Gastrocnemius medialis (tissue), 4 donors: ENCODE measurements at regions of chr1 and their contacts with region 1.

Region 1: DNA sequence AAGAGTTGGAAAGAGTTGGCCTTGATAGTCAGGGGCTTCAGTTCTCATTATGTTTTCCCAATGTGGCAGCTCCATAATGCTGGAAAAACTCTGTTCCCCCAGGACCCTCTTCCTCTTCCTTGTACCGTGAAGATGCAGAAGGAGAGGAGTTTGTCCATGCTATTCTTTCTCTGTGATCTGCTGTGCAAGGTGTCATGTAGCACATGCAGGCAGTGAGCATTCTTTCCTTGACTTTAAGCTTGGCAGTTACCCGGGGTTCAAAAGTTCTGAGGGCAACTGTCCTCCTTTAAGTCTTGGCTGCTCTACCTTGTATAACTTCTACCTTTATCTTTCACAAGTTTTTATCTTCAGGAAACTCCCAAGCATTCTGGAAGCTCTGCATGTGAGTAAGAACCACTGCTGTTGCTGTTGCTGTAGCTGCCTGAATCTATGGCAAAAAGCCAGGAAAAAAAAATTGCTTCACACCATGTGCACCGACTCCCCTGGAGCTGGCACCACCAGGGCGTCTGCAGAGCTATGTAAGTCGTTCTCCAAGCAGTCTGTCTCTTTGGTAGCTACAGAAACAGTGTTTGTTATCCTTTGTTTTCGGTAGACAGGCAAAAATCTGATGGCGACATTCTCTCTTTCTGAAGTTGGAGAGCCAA is 42.7 kb upstream of the SLC16A1 start:
- DNase-seq: peak; percentile 52 to 79
- ATAC-seq: peak; percentile 63 to 78
- H3K4me3 ChIP-seq: no peak overlapping the region
- H3K27ac ChIP-seq: peak overlapping the region; percentile 91 to 94 (median 94)
- H3K4me1 ChIP-seq: peaks cover 51 to 67% of the 10 kb centered on the region in 2 donors
- H3K27me3 ChIP-seq: no peaks in the 10 kb centered on the region
- CTCF ChIP-seq: no peak
- POLR2A ChIP-seq: no peak

Region 2: GRCh38 chr1:112840631-112841624 is 157.8 kb before region 1 on chr1:
- in situ Hi-C with region 1: no loop called
- intact Hi-C with region 1: no loop called
- DNase-seq: no peak
- ATAC-seq: no peak
- H3K4me3 ChIP-seq: no peak overlapping the region
- H3K27ac ChIP-seq: no peak overlapping the region
- H3K4me1 ChIP-seq: no peaks in the 10 kb centered on the region
- H3K27me3 ChIP-seq: no peaks in the 10 kb centered on the region
- CTCF ChIP-seq: no peak
- POLR2A ChIP-seq: no peak

Region 3: DNA sequence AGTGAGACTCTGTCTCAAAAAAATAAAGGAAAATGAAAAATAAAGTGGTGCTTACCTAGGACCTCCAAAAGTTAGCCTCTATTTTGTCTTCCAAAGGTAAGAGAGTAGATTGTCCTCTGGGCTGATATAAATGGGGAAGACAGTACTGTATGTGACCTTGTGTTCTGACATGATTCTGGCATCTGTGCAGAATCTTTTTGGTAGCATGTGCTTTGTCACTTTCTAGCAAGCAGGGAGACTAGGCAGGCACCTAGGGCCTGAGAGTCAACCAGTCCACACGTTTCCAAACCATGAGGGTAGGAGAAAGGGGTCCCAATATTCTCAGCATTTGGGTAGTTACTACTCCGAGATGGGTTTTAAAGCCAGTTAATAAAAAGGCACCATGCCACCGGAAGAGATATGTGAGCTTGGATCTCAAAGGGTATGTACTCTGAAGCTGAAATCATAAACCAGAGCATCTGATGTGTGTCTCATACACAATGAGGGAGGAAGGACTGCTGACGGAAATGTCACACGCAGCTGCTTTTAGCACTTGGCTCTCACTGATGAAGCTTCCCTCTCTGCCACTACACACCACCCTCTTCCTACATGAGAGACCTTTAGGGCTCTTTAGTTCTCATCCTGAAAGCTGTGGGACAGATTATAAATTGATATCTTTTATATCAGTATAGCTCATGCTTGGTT is 15.7 kb before region 1 on chr1:
- in situ Hi-C with region 1: no loop called
- intact Hi-C with region 1: loop called (anchors 1 kb)
- DNase-seq: peak; percentile 75 to 81
- ATAC-seq: peak; percentile 97 to 99
- H3K4me3 ChIP-seq: no peak overlapping the region
- H3K27ac ChIP-seq: peak overlapping the region; percentile 91 to 94 (median 94)
- H3K4me1 ChIP-seq: peaks cover 35 to 37% of the 10 kb centered on the region in 2 donors
- H3K27me3 ChIP-seq: no peaks in the 10 kb centered on the region
- CTCF ChIP-seq: no peak
- POLR2A ChIP-seq: peak; percentile 37 to 46

Region 4: GRCh38 chr1:113783254-113784099 is 784.8 kb after region 1 on chr1:
- in situ Hi-C with region 1: no loop called
- intact Hi-C with region 1: loop called (anchors 10 kb)
- DNase-seq: peak in 1 of 2 donors; percentile 24
- ATAC-seq: peak; percentile 25 to 50
- H3K4me3 ChIP-seq: peak overlapping the region in 3 of 4 donors; percentile 3 to 23 (median 19)
- H3K27ac ChIP-seq: peak overlapping the region; percentile 76 to 84 (median 80)
- H3K4me1 ChIP-seq: peaks cover 72 to 74% of the 10 kb centered on the region in 2 donors
- H3K27me3 ChIP-seq: no peaks in the 10 kb centered on the region
- CTCF ChIP-seq: no peak
- POLR2A ChIP-seq: no peak